ENCODE measurements at regions of chr1 and their contacts with region 1.

Region 1: GRCh38 chr1:9689011-9689706 is 37.6 kb downstream of the PIK3CD start:
- DNase-seq: peak in 1 of 2 experiments; percentile 96
- H3K4me3 ChIP-seq: peak overlapping the region; percentile 46 to 81 (median 59)
- H3K27ac ChIP-seq: peak overlapping the region; percentile 53; the same call in 1 of the 2 replicates
- H3K4me1 ChIP-seq: peaks cover 7 to 24% (median 15%) of the 10 kb centered on the region in 4 experiments
- H3K27me3 ChIP-seq: peaks cover 0 to 13% (median 11%) of the 10 kb centered on the region in 4 experiments; a peak in 6 of 7 replicates
- CTCF ChIP-seq: no peak
- EP300 ChIP-seq: no peak
- POLR2A ChIP-seq: no peak; a peak in 1 of 3 replicates
- RAD21 ChIP-seq: no peak

Region 2: GRCh38 chr1:9700340-9700739 is 11.2 kb after region 1 on chr1:
- CTCF ChIA-PET with region 1: interaction called, 16 read pairs
- POLR2A ChIA-PET with region 1: interaction called, 4 read pairs
- DNase-seq: no peak
- H3K4me3 ChIP-seq: no peak overlapping the region
- H3K27ac ChIP-seq: no peak overlapping the region
- H3K4me1 ChIP-seq: peaks cover 0 to 2% (median 0%) of the 10 kb centered on the region in 4 experiments; a peak in 1 of 7 replicates
- H3K27me3 ChIP-seq: no peaks in the 10 kb centered on the region
- CTCF ChIP-seq: no peak
- EP300 ChIP-seq: no peak
- POLR2A ChIP-seq: no peak
- RAD21 ChIP-seq: no peak

Region 3: GRCh38 chr1:9717193-9718005 is 28.2 kb after region 1 on chr1:
- CTCF ChIA-PET with region 1: interaction called, 49 read pairs
- POLR2A ChIA-PET with region 1: interaction called, 8 read pairs
- DNase-seq: no peak
- H3K4me3 ChIP-seq: no peak overlapping the region
- H3K27ac ChIP-seq: peak overlapping the region; percentile 49; the same call in 1 of the 2 replicates
- H3K4me1 ChIP-seq: peaks cover 4 to 50% (median 35%) of the 10 kb centered on the region in 4 experiments
- H3K27me3 ChIP-seq: no peaks in the 10 kb centered on the region
- CTCF ChIP-seq: peak in 2 of 3 experiments; percentile 33 to 42; a peak in 1 of 4 replicates
- EP300 ChIP-seq: no peak
- POLR2A ChIP-seq: no peak
- RAD21 ChIP-seq: peak in 1 of 2 experiments; percentile 34; a peak in 1 of 4 replicates

Region 4: GRCh38 chr1:9842781-9843577 is 153.8 kb after region 1 on chr1:
- CTCF ChIA-PET with region 1: no interaction called
- POLR2A ChIA-PET with region 1: no interaction called
- DNase-seq: no peak
- H3K4me3 ChIP-seq: no peak overlapping the region
- H3K27ac ChIP-seq: no peak overlapping the region
- H3K4me1 ChIP-seq: peaks cover 0 to 22% (median 16%) of the 10 kb centered on the region in 4 experiments; a peak in 6 of 7 replicates
- H3K27me3 ChIP-seq: no peaks in the 10 kb centered on the region
- CTCF ChIP-seq: peak in 1 of 3 experiments; percentile 32; a peak in 1 of 4 replicates
- EP300 ChIP-seq: no peak
- POLR2A ChIP-seq: no peak
- RAD21 ChIP-seq: no peak